Activated naive CD8-positive, alpha-beta T cell treated with anti-CD3 and anti-CD28 coated beads, Interleukin-2, amount 10 ng/mL, durations not matched to agents 7 days and 5 days (primary cell): ENCODE measurements at regions of chr20 and their contacts with region 1.

Region 1: GRCh38 chr20:17682103-17682888 is at the start of gene RRBP1:
- DNase-seq: peak; percentile 96
- ATAC-seq: peak; percentile 96
- H3K4me3 Mint-ChIP-seq: peak within 1 kb of the TSS; percentile 76
- H3K27ac Mint-ChIP-seq: peak within 1 kb of the TSS; percentile 84
- H3K4me1 Mint-ChIP-seq: peaks cover 22% of the 10 kb centered on the region
- H3K27me3 Mint-ChIP-seq: peaks cover 30% of the 10 kb centered on the region
- total RNA-seq, gene RRBP1: 48.0 to 51.0 TPM

Region 2: DNA sequence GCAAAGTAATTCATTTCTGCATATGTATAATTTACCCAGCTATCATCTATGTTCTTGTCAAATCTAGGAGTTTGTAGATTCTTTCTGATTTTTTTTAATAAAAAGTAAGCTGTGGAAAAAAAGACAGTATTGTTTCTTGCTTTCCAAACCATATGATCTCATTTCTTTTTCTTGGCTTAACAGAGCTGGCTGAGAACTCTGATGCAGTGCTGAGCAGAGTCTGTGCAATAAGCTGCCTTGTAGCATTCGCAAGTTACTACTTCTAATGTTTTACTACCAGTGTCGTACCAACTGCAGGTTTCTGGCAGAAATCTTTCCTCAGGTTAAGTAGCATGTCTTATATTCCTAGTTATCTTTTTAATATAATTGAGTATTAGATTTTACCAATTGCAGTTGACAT is 15.8 kb before region 1 on chr20:
- POLR2A ChIA-PET with region 1: interaction called, 10 read pairs
- DNase-seq: no peak
- ATAC-seq: no peak
- H3K4me3 Mint-ChIP-seq: no peak overlapping the region
- H3K27ac Mint-ChIP-seq: peak overlapping the region; percentile 40
- H3K4me1 Mint-ChIP-seq: peaks cover 52% of the 10 kb centered on the region
- H3K27me3 Mint-ChIP-seq: no peaks in the 10 kb centered on the region

Region 3: DNA sequence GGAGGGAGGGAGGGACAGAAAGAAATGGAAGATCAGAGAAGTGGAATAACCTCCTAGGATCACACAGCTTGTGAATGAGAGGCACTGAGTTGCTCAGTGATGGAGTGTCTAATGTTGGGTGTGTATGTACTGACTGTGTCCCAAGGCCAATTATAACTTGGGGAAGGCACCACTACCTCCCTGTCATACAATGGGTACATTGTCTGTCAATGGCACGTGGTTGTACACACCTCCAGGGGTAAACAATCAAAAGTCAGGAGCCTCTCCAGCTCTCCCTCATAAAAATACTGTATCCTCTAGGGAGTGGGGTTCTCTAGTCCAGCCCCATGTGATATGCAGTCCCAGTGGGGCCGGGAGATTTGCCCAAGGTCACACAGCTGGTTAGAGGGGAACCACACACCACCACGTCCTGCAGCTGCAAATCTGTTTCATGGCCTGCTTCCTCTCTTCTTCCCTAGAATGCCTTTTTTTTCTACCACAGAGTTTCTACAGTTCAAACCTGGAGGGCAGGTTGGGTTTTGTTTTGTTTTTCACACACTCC is 173.8 kb after region 1 on chr20:
- POLR2A ChIA-PET with region 1: interaction called, 11 read pairs
- DNase-seq: no peak
- ATAC-seq: peak; percentile 45
- H3K4me3 Mint-ChIP-seq: peak overlapping the region; percentile 9
- H3K27ac Mint-ChIP-seq: peak overlapping the region; percentile 23
- H3K4me1 Mint-ChIP-seq: peaks cover 43% of the 10 kb centered on the region
- H3K27me3 Mint-ChIP-seq: peaks cover 30% of the 10 kb centered on the region